Naive thymus-derived CD4-positive, alpha-beta T cell (primary cell): ENCODE measurements at regions of chr17 and their contacts with region 1.

Region 1: GRCh38 chr17:34146440-34147043 is 108.5 kb upstream of the CCL2 start:
- DNase-seq: peak in 7 of 9 donors; percentile 3 to 59 (median 15)
- ATAC-seq: no peak
- H3K4me3 ChIP-seq: no peak overlapping the region
- H3K4me3 Mint-ChIP-seq: no peak overlapping the region
- H3K27ac ChIP-seq: no peak overlapping the region
- H3K27ac Mint-ChIP-seq: no peak overlapping the region
- H3K4me1 ChIP-seq: no peaks in the 10 kb centered on the region
- H3K4me1 Mint-ChIP-seq: no peaks in the 10 kb centered on the region
- H3K27me3 ChIP-seq: no peaks in the 10 kb centered on the region
- H3K27me3 Mint-ChIP-seq: peaks cover 9 to 42% (median 17%) of the 10 kb centered on the region in 5 donors

Region 2: DNA sequence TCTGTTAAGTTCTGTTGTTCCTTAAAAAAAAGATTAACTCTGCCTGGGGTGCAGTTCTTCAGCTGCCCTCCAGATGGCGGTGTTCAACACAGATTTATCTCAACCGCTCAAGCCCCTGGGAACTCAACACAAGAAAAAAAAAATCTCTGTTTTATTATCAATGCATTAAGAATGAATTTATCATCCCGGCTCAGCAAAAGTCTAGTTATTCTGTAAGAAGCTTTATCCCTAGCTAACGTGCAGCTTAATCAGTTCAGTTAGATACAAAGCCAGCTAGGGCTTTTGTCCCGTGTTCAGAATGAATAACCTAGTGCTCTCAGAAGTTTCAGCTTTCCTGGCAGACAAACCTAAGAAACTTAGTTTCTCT is 367.3 kb before region 1 on chr17:
- CTCF ChIA-PET with region 1: no interaction called
- POLR2A ChIA-PET with region 1: no interaction called
- intact Hi-C with region 1: loop called in 1 of 2 experiments (anchors 1 kb)
- DNase-seq: peak in 6 of 9 donors; percentile 9 to 44 (median 24)
- ATAC-seq: peak; percentile 49
- H3K4me3 ChIP-seq: no peak overlapping the region
- H3K4me3 Mint-ChIP-seq: no peak overlapping the region
- H3K27ac ChIP-seq: no peak overlapping the region
- H3K27ac Mint-ChIP-seq: no peak overlapping the region
- H3K4me1 ChIP-seq: no peaks in the 10 kb centered on the region
- H3K4me1 Mint-ChIP-seq: no peaks in the 10 kb centered on the region
- H3K27me3 ChIP-seq: no peaks in the 10 kb centered on the region
- H3K27me3 Mint-ChIP-seq: peaks cover 3 to 29% (median 19%) of the 10 kb centered on the region in 5 donors